HCT116 (cell line): ENCODE measurements at regions of chr4 and their contacts with region 1.

Region 1: DNA sequence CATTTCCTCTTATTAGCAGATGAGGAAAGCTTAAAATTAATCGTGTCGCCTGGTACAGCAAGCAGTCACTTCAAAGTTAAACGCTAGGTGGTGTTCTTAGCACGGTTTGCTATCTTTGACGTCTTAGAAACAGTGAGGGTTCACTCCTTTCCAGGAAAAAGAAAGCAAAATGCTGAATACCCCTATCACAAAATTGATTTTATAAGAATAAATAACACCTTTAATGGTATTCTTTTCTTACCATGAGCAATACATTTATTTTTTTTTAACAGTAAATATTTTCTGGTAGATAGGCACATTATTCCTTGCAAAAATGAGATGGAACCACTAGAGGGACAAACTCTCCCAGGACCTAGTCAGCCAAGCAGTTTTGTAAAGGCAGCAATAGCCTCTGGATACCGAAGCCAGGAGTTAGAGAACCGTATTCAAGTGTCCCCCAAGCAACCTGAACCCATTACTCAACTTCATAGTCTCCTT is 153.9 kb downstream of the KDR start:
- DNase-seq: peak; percentile 53
- ATAC-seq: peak; percentile 95
- H3K4me3 ChIP-seq: no peak overlapping the region; a peak in 1 of 4 replicates
- H3K27ac ChIP-seq: no peak overlapping the region
- H3K4me1 ChIP-seq: no peaks in the 10 kb centered on the region
- H3K27me3 ChIP-seq: no peaks in the 10 kb centered on the region
- CTCF ChIP-seq: peak; percentile 68 to 98 (median 86)
- POLR2A ChIP-seq: no peak
- RAD21 ChIP-seq: peak; percentile 85

Region 2: GRCh38 chr4:54986095-54986846 is 14.8 kb after region 1 on chr4:
- CTCF ChIA-PET with region 1: interaction called, 12 read pairs
- POLR2A ChIA-PET with region 1: no interaction called
- RAD21 ChIA-PET with region 1: no interaction called
- intact Hi-C with region 1: no loop called
- DNase-seq: no peak
- ATAC-seq: no peak
- H3K4me3 ChIP-seq: no peak overlapping the region
- H3K27ac ChIP-seq: no peak overlapping the region
- H3K4me1 ChIP-seq: no peaks in the 10 kb centered on the region
- H3K27me3 ChIP-seq: no peaks in the 10 kb centered on the region
- CTCF ChIP-seq: no peak
- POLR2A ChIP-seq: no peak
- RAD21 ChIP-seq: no peak

Region 3: GRCh38 chr4:55051532-55051931 is 80.0 kb after region 1 on chr4:
- CTCF ChIA-PET with region 1: no interaction called
- POLR2A ChIA-PET with region 1: no interaction called
- RAD21 ChIA-PET with region 1: no interaction called
- intact Hi-C with region 1: no loop called
- DNase-seq: no peak
- ATAC-seq: no peak
- H3K4me3 ChIP-seq: no peak overlapping the region
- H3K27ac ChIP-seq: no peak overlapping the region
- H3K4me1 ChIP-seq: no peaks in the 10 kb centered on the region
- H3K27me3 ChIP-seq: 0 out of 2 replicates have a peak, but pooled peaks cover 6% of the 10 kb centered on the region
- CTCF ChIP-seq: no peak
- POLR2A ChIP-seq: no peak
- RAD21 ChIP-seq: no peak

Region 4: GRCh38 chr4:55184600-55185523 is 213.3 kb after region 1 on chr4:
- CTCF ChIA-PET with region 1: interaction called, 10 read pairs
- POLR2A ChIA-PET with region 1: no interaction called
- RAD21 ChIA-PET with region 1: no interaction called
- intact Hi-C with region 1: no loop called
- DNase-seq: peak; percentile 64
- ATAC-seq: peak; percentile 80
- H3K4me3 ChIP-seq: peak overlapping the region in 1 of 2 experiments; percentile 17; a peak in 2 of 4 replicates
- H3K27ac ChIP-seq: peak overlapping the region; percentile 59
- H3K4me1 ChIP-seq: peaks cover 16 to 21% of the 10 kb centered on the region in 2 experiments
- H3K27me3 ChIP-seq: no peaks in the 10 kb centered on the region
- CTCF ChIP-seq: peak; percentile 53 to 79 (median 69); a peak in 5 of 6 replicates
- POLR2A ChIP-seq: no peak
- RAD21 ChIP-seq: peak; percentile 56

Region 5: DNA sequence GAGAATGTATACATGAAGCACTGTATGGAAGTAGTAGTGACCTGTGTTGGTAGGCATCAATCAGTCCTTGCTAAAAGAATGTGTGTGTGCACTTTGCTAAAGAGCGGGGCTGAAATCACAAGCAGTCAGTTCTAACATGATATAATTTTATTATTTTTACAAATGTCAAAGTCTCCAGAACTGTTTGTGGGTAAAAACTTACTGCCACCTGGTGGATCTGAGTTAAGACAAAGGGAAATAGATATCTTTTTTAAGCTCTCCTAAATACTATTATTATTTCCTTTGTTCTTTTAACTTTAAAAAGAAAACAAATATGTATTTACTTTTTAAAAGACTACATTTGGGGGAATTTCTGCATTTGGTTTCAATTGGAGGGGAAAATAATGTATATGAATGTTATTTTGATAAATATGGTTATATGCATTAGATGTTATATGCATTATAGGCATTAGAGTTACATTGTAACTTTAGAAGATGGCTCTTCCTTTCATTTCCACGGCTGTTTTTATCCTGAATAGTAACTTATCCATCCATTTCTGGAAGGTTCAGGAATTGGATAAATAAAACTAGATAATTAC is 583.0 kb after region 1 on chr4:
- CTCF ChIA-PET with region 1: interaction called, 4 read pairs
- POLR2A ChIA-PET with region 1: no interaction called
- RAD21 ChIA-PET with region 1: no interaction called
- intact Hi-C with region 1: loop called (anchors 10 kb)
- DNase-seq: peak; percentile 36
- ATAC-seq: no peak
- H3K4me3 ChIP-seq: no peak overlapping the region
- H3K27ac ChIP-seq: no peak overlapping the region
- H3K4me1 ChIP-seq: peaks cover 20 to 35% of the 10 kb centered on the region in 2 experiments
- H3K27me3 ChIP-seq: no peaks in the 10 kb centered on the region
- CTCF ChIP-seq: peak; percentile 42 to 81 (median 48)
- POLR2A ChIP-seq: no peak
- RAD21 ChIP-seq: peak; percentile 82